ENCODE measurements at regions of chr2 and their contacts with region 1.

Region 1: GRCh38 chr2:43576981-43577892 is 18.6 kb downstream of the THADA start:
- DNase-seq: peak in 8 of 14 experiments; percentile 12 to 76 (median 34)
- ATAC-seq: no peak
- H3K4me3 ChIP-seq: no peak overlapping the region
- H3K4me3 Mint-ChIP-seq: no peak overlapping the region
- H3K27ac ChIP-seq: no peak overlapping the region
- H3K27ac Mint-ChIP-seq: no peak overlapping the region
- H3K4me1 ChIP-seq: peaks cover 4% of the 10 kb centered on the region
- H3K4me1 Mint-ChIP-seq: peaks cover 23% of the 10 kb centered on the region
- H3K27me3 ChIP-seq: no peaks in the 10 kb centered on the region
- H3K27me3 Mint-ChIP-seq: no peaks in the 10 kb centered on the region
- CTCF ChIP-seq: peak; percentile 92

Region 2: DNA sequence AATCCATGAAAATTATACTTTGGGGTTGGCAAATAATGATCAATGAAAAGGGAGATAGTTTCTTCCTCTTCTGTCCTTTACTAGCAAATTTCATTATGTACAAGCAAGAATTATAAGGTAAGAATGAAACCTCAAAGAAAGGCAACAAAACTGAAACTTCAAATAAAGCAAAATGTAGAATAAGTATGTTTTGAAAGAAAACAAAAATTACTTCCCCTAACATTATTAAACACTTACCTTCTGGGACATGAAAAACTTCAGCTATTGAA is 10.8 kb before region 1 on chr2:
- CTCF ChIA-PET with region 1: interaction called, 14 read pairs
- POLR2A ChIA-PET with region 1: interaction called, 3 read pairs
- intact Hi-C with region 1: no loop called
- DNase-seq: no peak
- ATAC-seq: no peak
- H3K4me3 ChIP-seq: no peak overlapping the region
- H3K4me3 Mint-ChIP-seq: no peak overlapping the region
- H3K27ac ChIP-seq: no peak overlapping the region
- H3K27ac Mint-ChIP-seq: no peak overlapping the region
- H3K4me1 ChIP-seq: peaks cover 4% of the 10 kb centered on the region
- H3K4me1 Mint-ChIP-seq: peaks cover 30% of the 10 kb centered on the region
- H3K27me3 ChIP-seq: no peaks in the 10 kb centered on the region
- H3K27me3 Mint-ChIP-seq: no peaks in the 10 kb centered on the region
- CTCF ChIP-seq: no peak

Region 3: GRCh38 chr2:43648994-43649701 is 71.9 kb after region 1 on chr2:
- CTCF ChIA-PET with region 1: no interaction called
- POLR2A ChIA-PET with region 1: no interaction called
- intact Hi-C with region 1: no loop called
- DNase-seq: no peak
- ATAC-seq: no peak
- H3K4me3 ChIP-seq: no peak overlapping the region
- H3K4me3 Mint-ChIP-seq: no peak overlapping the region
- H3K27ac ChIP-seq: no peak overlapping the region
- H3K27ac Mint-ChIP-seq: no peak overlapping the region
- H3K4me1 ChIP-seq: no peaks in the 10 kb centered on the region
- H3K4me1 Mint-ChIP-seq: no peaks in the 10 kb centered on the region
- H3K27me3 ChIP-seq: no peaks in the 10 kb centered on the region
- H3K27me3 Mint-ChIP-seq: peaks cover 21% of the 10 kb centered on the region
- CTCF ChIP-seq: no peak